Activated naive CD4-positive, alpha-beta T cell treated with anti-CD3 and anti-CD28 coated beads for 36 hours (primary cell): ENCODE measurements at regions of chr14 and their contacts with region 1.

Region 1: DNA sequence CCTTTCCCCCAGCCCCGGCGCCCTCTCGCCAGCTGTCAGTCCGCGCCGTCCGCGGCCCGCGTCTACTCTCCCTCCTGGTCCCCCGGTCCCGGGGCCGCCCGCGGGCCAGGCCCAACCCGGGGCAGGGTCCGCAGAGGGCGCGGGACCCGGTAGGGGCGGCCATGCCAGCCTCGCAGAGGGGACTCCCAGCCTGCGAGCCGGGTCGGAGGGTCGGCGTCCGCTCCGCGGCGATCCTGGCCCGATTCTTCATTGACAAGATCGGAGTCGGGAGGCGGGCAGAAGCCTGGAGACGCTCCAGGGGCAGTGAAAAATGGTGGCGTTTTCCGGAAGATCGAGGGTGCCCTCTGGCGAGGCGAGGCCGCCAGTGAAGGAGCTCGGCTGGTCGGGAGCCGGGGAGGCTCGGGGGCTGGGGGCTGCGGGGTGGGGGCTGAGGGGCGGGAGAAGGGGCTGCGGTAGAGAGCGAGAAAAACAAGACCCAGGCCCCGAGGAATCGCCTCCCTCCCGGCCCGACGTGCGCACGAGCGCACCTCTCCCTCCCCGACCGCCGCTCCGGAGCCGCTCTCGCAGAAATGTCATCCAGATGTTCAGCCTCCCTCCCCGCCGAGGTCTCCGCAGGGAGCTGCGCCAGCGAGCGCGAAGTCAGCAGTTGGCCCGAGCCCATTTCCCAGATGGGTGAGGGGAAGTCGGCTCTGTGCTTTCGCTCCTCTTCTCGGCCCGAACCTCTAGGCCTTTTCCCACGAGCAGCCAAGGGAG is 647 bp upstream of the TGFB3 start:
- DNase-seq: peak; percentile 81
- H3K4me3 Mint-ChIP-seq: peak overlapping the region; percentile 77
- H3K27ac Mint-ChIP-seq: no peak overlapping the region
- H3K4me1 Mint-ChIP-seq: peaks cover 43% of the 10 kb centered on the region
- H3K27me3 Mint-ChIP-seq: no peaks in the 10 kb centered on the region

Region 2: GRCh38 chr14:75427482-75428229 is 554.8 kb before region 1 on chr14 and contains the start of gene JDP2:
- CTCF ChIA-PET with region 1: no interaction called
- intact Hi-C with region 1: loop called (anchors 10 kb)
- DNase-seq: peak; percentile 53
- H3K4me3 Mint-ChIP-seq: peak within 1 kb of the TSS; percentile 73
- H3K27ac Mint-ChIP-seq: no peak within 1 kb of the TSS
- H3K4me1 Mint-ChIP-seq: peaks cover 17% of the 10 kb centered on the region
- H3K27me3 Mint-ChIP-seq: peaks cover 15% of the 10 kb centered on the region
- total RNA-seq, gene JDP2: 2.8 to 3.2 TPM

Region 3: GRCh38 chr14:75577729-75578101 is 404.7 kb before region 1 on chr14:
- CTCF ChIA-PET with region 1: interaction called, 5 read pairs
- intact Hi-C with region 1: loop called (anchors 1 kb)
- DNase-seq: peak; percentile 88
- H3K4me3 Mint-ChIP-seq: peak overlapping the region; percentile 82
- H3K27ac Mint-ChIP-seq: peak overlapping the region; percentile 78
- H3K4me1 Mint-ChIP-seq: peaks cover 22% of the 10 kb centered on the region
- H3K27me3 Mint-ChIP-seq: no peaks in the 10 kb centered on the region

Region 4: GRCh38 chr14:75709207-75709812 is 273.1 kb before region 1 on chr14:
- CTCF ChIA-PET with region 1: interaction called, 73 read pairs
- intact Hi-C with region 1: loop called (anchors 1 kb)
- DNase-seq: peak; percentile 80
- H3K4me3 Mint-ChIP-seq: no peak overlapping the region
- H3K27ac Mint-ChIP-seq: no peak overlapping the region
- H3K4me1 Mint-ChIP-seq: no peaks in the 10 kb centered on the region
- H3K27me3 Mint-ChIP-seq: no peaks in the 10 kb centered on the region

Region 5: GRCh38 chr14:75906676-75907280 is 75.7 kb before region 1 on chr14:
- CTCF ChIA-PET with region 1: interaction called, 131 read pairs
- intact Hi-C with region 1: loop called (anchors 1 kb)
- DNase-seq: peak; percentile 87
- H3K4me3 Mint-ChIP-seq: no peak overlapping the region
- H3K27ac Mint-ChIP-seq: no peak overlapping the region
- H3K4me1 Mint-ChIP-seq: no peaks in the 10 kb centered on the region
- H3K27me3 Mint-ChIP-seq: no peaks in the 10 kb centered on the region

Region 6: GRCh38 chr14:76151398-76152339 is 169.2 kb after region 1 on chr14 and contains the start of gene GPATCH2L:
- CTCF ChIA-PET with region 1: no interaction called
- intact Hi-C with region 1: loop called (anchors 5 kb)
- DNase-seq: peak; percentile 99
- H3K4me3 Mint-ChIP-seq: peak within 1 kb of the TSS; percentile 98
- H3K27ac Mint-ChIP-seq: peak within 1 kb of the TSS; percentile 97
- H3K4me1 Mint-ChIP-seq: peaks cover 48% of the 10 kb centered on the region
- H3K27me3 Mint-ChIP-seq: no peaks in the 10 kb centered on the region
- total RNA-seq, gene GPATCH2L: 40.0 to 43.4 TPM

Region 7: GRCh38 chr14:76968621-76969063 is 986.2 kb after region 1 on chr14:
- CTCF ChIA-PET with region 1: no interaction called
- intact Hi-C with region 1: loop called (anchors 10 kb)
- DNase-seq: no peak
- H3K4me3 Mint-ChIP-seq: no peak overlapping the region
- H3K27ac Mint-ChIP-seq: no peak overlapping the region
- H3K4me1 Mint-ChIP-seq: peaks cover 30% of the 10 kb centered on the region
- H3K27me3 Mint-ChIP-seq: no peaks in the 10 kb centered on the region